WTC11 (cell line): ENCODE measurements at regions of chr14 and their contacts with region 1.

Region 1: DNA sequence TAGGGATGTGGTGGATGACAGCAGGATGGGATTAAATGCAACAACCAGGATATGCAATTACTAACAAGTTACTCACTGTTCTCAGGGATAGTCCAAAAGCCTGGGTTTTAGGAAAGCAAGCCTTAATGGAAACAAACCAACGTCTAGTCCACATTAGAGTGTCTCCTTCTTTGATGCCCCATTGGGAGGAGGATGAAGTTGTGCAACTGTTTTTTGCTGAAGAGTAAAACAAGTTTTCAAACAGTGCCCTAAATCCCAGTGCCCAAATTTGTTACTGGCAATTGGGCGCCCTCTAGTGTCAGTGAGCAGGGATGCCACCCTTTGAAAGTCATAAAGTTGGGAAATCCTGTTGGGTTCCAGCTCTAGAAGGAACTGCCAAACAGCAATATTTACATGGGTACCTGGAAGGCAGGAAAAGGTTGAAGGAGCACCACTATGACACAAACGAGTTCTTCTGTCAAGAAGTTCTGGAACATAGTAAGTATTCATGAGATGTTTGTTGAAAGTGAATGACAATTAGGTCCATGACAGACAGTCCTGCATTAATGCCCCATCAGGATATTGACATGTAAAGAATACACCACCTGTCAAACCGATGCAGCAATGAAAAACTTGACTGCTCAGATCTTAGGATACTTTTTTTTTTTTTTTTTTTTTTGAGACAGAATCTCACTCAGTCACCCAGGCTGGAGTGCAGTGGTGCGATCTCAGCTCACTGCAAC is 11.1 kb upstream of the DPF3 start:
- DNase-seq: peak; percentile 55
- ATAC-seq: peak; percentile 57
- H3K4me3 Mint-ChIP-seq: no peak overlapping the region
- H3K27ac Mint-ChIP-seq: no peak overlapping the region
- H3K4me1 Mint-ChIP-seq: peaks cover 25% of the 10 kb centered on the region
- H3K27me3 Mint-ChIP-seq: no peaks in the 10 kb centered on the region; the same call in 1 of the 2 replicates
- CTCF ChIP-seq: peak; percentile 96

Region 2: DNA sequence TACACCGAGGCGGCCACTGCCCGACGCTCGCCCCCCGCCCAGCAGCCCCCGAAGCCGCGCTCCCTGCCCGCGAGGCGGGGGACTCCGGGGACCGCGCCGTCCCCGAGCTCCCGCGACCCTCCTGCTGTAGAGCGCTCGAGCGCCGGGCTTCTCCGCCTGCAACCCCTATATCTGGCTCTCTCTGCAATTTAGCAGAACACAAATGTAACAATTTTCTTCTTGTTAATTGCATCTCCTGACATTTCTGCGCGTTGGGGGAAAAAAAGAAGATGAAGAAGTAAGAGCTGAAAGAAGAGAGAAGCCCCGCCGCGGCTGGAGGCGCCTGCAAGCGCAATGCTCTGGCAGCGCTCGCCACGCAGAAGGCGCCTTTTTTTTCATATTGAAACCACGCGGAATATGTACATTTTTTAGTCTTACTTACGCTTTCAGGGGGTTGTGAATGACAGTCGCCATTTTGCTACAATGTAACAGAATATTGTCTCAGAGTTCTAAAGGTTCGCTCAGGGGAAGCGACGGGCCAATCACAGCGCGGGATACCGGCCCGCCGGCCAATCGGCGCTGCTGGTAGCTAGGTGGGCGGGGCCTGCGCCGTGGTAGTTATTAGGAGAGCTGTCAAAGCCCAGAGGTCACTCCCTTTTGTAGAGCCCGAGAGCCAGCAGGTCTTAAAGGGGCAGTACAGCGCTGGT is 11.2 kb before region 1 on chr14 and contains the start of gene DPF3:
- CTCF ChIA-PET with region 1: interaction called, 19 read pairs
- POLR2A ChIA-PET with region 1: no interaction called
- DNase-seq: peak; percentile 98
- ATAC-seq: peak; percentile 90
- H3K4me3 Mint-ChIP-seq: peak within 1 kb of the TSS; percentile 92
- H3K27ac Mint-ChIP-seq: no peak within 1 kb of the TSS
- H3K4me1 Mint-ChIP-seq: peaks cover 40% of the 10 kb centered on the region
- H3K27me3 Mint-ChIP-seq: peaks cover 85% of the 10 kb centered on the region
- CTCF ChIP-seq: no peak
- total RNA-seq, gene DPF3: 0.31 to 0.53 TPM (median 0.32 TPM) in 3 replicates

Region 3: GRCh38 chr14:72926292-72927028 is 21.5 kb after region 1 on chr14 and contains the start of gene DCAF4:
- CTCF ChIA-PET with region 1: no interaction called
- POLR2A ChIA-PET with region 1: no interaction called
- DNase-seq: peak; percentile 96
- ATAC-seq: peak; percentile 98
- H3K4me3 Mint-ChIP-seq: peak within 1 kb of the TSS; percentile 87
- H3K27ac Mint-ChIP-seq: peak within 1 kb of the TSS; percentile 70
- H3K4me1 Mint-ChIP-seq: peaks cover 19% of the 10 kb centered on the region
- H3K27me3 Mint-ChIP-seq: peaks cover 20% of the 10 kb centered on the region
- CTCF ChIP-seq: no peak
- total RNA-seq, gene DCAF4: 17.4 to 19.6 TPM (median 18.8 TPM) in 3 replicates